ENCODE measurements at regions of chr10 and their contacts with region 1.

Region 1: GRCh38 chr10:99395750-99396445 is 34.5 kb downstream of the GOT1 start:
- DNase-seq: no peak
- ATAC-seq: peak; percentile 4 to 54 (median 22)
- H3K4me3 ChIP-seq: no peak overlapping the region
- H3K27ac ChIP-seq: peak overlapping the region in 1 of 12 donors; percentile 15
- H3K4me1 ChIP-seq: peaks cover 0 to 49% (median 14%) of the 10 kb centered on the region in 12 donors
- H3K27me3 ChIP-seq: no peaks in the 10 kb centered on the region
- CTCF ChIP-seq: no peak
- POLR2A ChIP-seq: no peak

Region 2: GRCh38 chr10:99430451-99431189 is 34.7 kb after region 1 on chr10 and contains the start of gene GOT1:
- intact Hi-C with region 1: loop called in 7 of 10 experiments (anchors 2 to 5 kb)
- DNase-seq: peak; percentile 94 to 98 (median 96)
- ATAC-seq: peak; percentile 95 to 97 (median 96)
- H3K4me3 ChIP-seq: peak within 1 kb of the TSS; percentile 71 to 96 (median 85)
- H3K27ac ChIP-seq: peak within 1 kb of the TSS; percentile 90 to 99 (median 97)
- H3K4me1 ChIP-seq: peaks cover 0 to 56% (median 30%) of the 10 kb centered on the region in 12 donors
- H3K27me3 ChIP-seq: no peaks in the 10 kb centered on the region
- CTCF ChIP-seq: no peak
- POLR2A ChIP-seq: peak; percentile 50 to 81
- total RNA-seq, gene GOT1: 294 to 815 (median 505) TPM

Region 3: GRCh38 chr10:99435986-99436638 is 40.2 kb after region 1 on chr10:
- intact Hi-C with region 1: loop called in 7 of 10 experiments (anchors 2 to 5 kb)
- DNase-seq: no peak
- ATAC-seq: peak in 2 of 4 donors; percentile 26 to 31
- H3K4me3 ChIP-seq: no peak overlapping the region
- H3K27ac ChIP-seq: peak overlapping the region in 1 of 12 donors; percentile 66
- H3K4me1 ChIP-seq: peaks cover 0 to 40% (median 24%) of the 10 kb centered on the region in 12 donors
- H3K27me3 ChIP-seq: no peaks in the 10 kb centered on the region
- CTCF ChIP-seq: peak; percentile 36 to 69 (median 54)
- POLR2A ChIP-seq: no peak

Region 4: GRCh38 chr10:99506416-99506815 is 110.5 kb after region 1 on chr10:
- intact Hi-C with region 1: no loop called
- DNase-seq: no peak
- ATAC-seq: no peak
- H3K4me3 ChIP-seq: no peak overlapping the region
- H3K27ac ChIP-seq: no peak overlapping the region
- H3K4me1 ChIP-seq: no peaks in the 10 kb centered on the region
- H3K27me3 ChIP-seq: peaks cover 0 to 74% (median 14%) of the 10 kb centered on the region in 9 donors
- CTCF ChIP-seq: no peak
- POLR2A ChIP-seq: no peak